H1 (cell line): ENCODE measurements at regions of chr3 and their contacts with region 1.

Region 1: DNA sequence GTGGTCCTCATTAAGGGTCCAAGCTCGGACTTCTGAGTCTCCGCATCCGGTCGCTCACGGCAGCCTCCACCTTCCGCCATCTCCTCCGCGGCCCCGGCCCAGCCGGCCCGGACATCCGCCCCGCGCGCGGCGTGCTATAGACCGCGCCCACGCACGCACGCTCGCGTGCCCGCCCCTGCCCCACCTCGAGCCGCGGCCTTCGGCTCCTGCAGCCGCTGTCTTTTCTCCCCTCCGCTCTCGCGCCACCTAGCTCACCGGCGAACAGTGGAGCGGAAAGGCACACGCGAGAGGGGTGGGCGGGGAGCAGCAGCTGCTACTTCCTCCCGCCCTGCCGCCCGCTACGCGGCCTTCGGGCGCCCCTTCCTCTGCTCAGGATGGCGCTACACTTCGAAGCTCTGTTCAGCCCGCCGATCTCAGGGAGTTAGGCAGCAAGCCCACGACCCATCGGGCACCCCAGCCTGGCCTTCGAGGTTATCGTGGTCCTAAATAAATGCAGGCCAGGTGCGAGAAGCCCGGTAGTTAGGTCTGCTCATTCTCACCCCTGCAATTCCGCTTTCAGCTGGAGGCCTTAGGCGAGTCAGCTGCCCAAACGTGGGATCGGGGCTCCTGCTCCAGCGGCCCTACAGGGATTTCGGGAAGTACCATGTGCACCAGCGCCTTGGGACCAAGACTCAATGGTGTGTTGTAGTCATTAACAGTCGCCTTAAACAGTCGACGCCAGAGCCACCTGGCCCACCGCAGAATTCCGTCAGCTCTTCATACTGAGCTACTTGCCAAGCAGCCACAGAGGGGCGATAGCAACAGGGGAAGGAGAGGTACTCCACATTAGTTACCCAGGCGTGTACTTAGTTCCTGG is at the start of gene USP4:
- DNase-seq: peak; percentile 43 to 81
- H3K4me3 ChIP-seq: peak within 1 kb of the TSS; percentile 59 to 75 (median 74)
- H3K27ac ChIP-seq: peak within 1 kb of the TSS; percentile 70; the same call in 1 of the 2 replicates
- H3K4me1 ChIP-seq: peaks cover 0 to 11% (median 5%) of the 10 kb centered on the region in 4 experiments; a peak in 4 of 7 replicates
- H3K27me3 ChIP-seq: no peaks in the 10 kb centered on the region; a peak in 1 of 7 replicates
- CTCF ChIP-seq: peak; percentile 42 to 71 (median 47)
- EP300 ChIP-seq: no peak
- POLR2A ChIP-seq: peak; percentile 39 to 44; a peak in 2 of 3 replicates
- RAD21 ChIP-seq: peak; percentile 53 to 63
- total RNA-seq, gene USP4: 27.8 and 28.3 TPM in 2 replicates

Region 2: DNA sequence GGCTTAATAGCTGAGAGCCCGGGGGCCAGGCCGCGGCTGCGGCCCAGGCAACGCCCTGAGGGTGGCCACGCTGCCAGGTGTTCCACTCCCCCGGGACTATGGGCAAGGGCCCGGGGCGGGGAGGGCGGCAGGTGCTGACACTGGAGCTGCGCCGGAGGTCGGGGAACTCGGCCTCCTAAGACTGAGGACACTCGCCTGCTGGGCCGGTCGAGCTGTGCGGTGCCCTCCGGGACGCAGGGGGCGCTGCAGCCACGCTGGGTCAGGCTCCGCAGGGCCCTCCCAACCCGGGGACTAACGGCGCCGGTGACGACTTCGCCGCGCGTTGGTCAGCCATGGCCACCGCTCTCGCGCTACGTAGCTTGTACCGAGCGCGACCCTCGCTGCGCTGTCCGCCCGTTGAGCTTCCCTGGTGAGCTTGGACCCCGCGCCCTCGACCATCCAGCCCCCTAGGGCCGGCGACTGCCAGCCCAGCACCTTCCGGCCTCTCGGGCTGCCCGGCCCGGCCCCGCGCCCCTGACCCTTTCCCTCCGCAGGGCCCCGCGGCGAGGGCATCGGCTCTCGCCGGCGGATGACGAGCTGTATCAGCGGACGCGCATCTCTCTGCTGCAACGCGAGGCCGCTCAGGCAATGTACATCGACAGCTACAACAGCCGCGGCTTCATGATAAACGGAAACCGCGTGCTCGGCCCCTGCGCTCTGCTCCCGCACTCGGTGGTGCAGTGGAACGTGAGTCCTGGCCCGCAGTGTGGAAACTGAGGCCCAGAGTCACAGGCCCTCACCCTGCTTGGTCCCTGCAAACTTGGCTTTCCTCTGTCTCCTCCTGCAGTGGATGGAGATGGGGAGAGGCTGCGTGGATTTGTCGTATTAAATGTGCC is 318.1 kb before region 1 on chr3 and contains the start of gene NDUFAF3:
- CTCF ChIA-PET with region 1: no interaction called
- POLR2A ChIA-PET with region 1: no interaction called
- DNase-seq: peak; percentile 82 to 98
- H3K4me3 ChIP-seq: peak within 1 kb of the TSS; percentile 84 to 97 (median 95)
- H3K27ac ChIP-seq: peak within 1 kb of the TSS; percentile 91
- H3K4me1 ChIP-seq: peaks cover 0 to 21% (median 13%) of the 10 kb centered on the region in 4 experiments; a peak in 6 of 7 replicates
- H3K27me3 ChIP-seq: no peaks in the 10 kb centered on the region; a peak in 1 of 7 replicates
- CTCF ChIP-seq: peak in 2 of 3 experiments; percentile 87 to 96; a peak in 3 of 4 replicates
- EP300 ChIP-seq: no peak; a peak in 1 of 3 replicates
- POLR2A ChIP-seq: peak in 1 of 2 experiments; percentile 88; a peak in 2 of 3 replicates
- RAD21 ChIP-seq: peak; percentile 25 to 41; a peak in 3 of 4 replicates
- total RNA-seq, gene NDUFAF3: 26.2 and 27.8 TPM in 2 replicates

Region 3: GRCh38 chr3:49255112-49255511 is 85.1 kb before region 1 on chr3:
- CTCF ChIA-PET with region 1: no interaction called
- POLR2A ChIA-PET with region 1: no interaction called
- DNase-seq: no peak
- H3K4me3 ChIP-seq: no peak overlapping the region
- H3K27ac ChIP-seq: no peak overlapping the region
- H3K4me1 ChIP-seq: no peaks in the 10 kb centered on the region
- H3K27me3 ChIP-seq: no peaks in the 10 kb centered on the region
- CTCF ChIP-seq: no peak
- EP300 ChIP-seq: no peak
- POLR2A ChIP-seq: no peak
- RAD21 ChIP-seq: no peak

Region 4: DNA sequence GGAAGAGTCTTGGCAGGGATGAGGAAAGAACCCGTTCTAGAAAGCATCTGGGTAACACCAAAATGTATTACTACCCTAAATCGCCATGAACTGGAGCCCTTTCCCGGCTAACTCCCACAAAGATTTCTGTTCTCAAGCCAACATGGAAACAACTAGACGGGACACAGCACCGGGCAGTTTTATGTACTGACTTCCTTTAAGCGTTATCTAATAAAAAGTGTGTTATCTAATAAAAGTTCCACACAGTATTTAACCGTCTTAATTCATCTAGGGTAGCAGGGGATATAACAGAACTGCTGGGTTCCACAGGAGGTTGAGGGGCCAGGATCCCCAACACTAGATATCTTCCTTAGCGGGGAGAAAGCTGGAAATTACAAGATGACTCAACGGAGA is 62.8 kb before region 1 on chr3:
- CTCF ChIA-PET with region 1: no interaction called
- POLR2A ChIA-PET with region 1: interaction called, 10 read pairs
- DNase-seq: no peak
- H3K4me3 ChIP-seq: peak overlapping the region; percentile 25 to 55 (median 36)
- H3K27ac ChIP-seq: no peak overlapping the region
- H3K4me1 ChIP-seq: peaks cover 0 to 4% (median 1%) of the 10 kb centered on the region in 4 experiments; a peak in 3 of 7 replicates
- H3K27me3 ChIP-seq: no peaks in the 10 kb centered on the region
- CTCF ChIP-seq: no peak
- EP300 ChIP-seq: no peak
- POLR2A ChIP-seq: no peak
- RAD21 ChIP-seq: no peak

Region 5: GRCh38 chr3:49302613-49303012 is 37.6 kb before region 1 on chr3:
- CTCF ChIA-PET with region 1: no interaction called
- POLR2A ChIA-PET with region 1: no interaction called
- DNase-seq: no peak
- H3K4me3 ChIP-seq: no peak overlapping the region
- H3K27ac ChIP-seq: no peak overlapping the region
- H3K4me1 ChIP-seq: no peaks in the 10 kb centered on the region
- H3K27me3 ChIP-seq: no peaks in the 10 kb centered on the region
- CTCF ChIP-seq: no peak
- EP300 ChIP-seq: no peak
- POLR2A ChIP-seq: no peak
- RAD21 ChIP-seq: no peak

Region 6: GRCh38 chr3:49351521-49352011 is 11.4 kb after region 1 on chr3:
- CTCF ChIA-PET with region 1: interaction called, 11 read pairs
- POLR2A ChIA-PET with region 1: interaction called, 15 read pairs
- DNase-seq: no peak
- H3K4me3 ChIP-seq: no peak overlapping the region
- H3K27ac ChIP-seq: no peak overlapping the region
- H3K4me1 ChIP-seq: no peaks in the 10 kb centered on the region; a peak in 1 of 7 replicates
- H3K27me3 ChIP-seq: no peaks in the 10 kb centered on the region
- CTCF ChIP-seq: no peak
- EP300 ChIP-seq: no peak
- POLR2A ChIP-seq: no peak
- RAD21 ChIP-seq: no peak

Region 7: DNA sequence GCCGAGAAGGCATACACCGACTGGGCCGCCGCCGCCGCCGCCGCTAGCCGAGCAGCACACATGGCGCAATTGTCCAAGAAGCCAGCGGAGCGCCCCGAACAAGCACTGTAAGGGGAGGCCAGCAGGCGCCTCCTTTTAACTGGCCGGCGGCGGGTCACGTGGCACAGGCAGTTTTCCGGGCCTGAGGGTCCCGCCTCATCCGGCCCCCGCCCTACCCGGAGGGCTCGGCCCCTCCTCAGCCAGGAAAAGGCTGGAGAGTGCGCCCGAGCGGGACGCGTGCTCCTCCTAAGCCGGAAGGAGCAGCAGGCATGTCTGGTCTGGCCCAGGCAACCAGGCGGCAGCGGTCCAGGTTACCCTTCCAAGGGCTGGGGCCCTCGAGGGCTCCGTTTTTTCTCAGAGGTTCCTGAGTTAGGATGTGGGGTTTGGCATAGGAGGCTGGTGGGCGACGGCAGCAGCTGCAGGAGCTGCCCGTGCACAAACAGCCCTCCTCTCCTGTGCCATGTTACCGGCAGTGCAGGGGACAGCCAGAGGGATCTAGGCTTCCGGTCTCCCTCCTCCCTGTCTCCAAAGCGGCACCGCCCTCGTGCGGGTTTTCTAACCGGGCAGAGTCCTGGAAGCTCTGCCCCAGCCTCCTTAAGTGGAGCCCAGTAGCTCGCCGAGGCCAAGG is 18.2 kb after region 1 on chr3 and contains the start of gene GPX1:
- CTCF ChIA-PET with region 1: interaction called, 11 read pairs
- POLR2A ChIA-PET with region 1: interaction called, 45 read pairs
- DNase-seq: peak; percentile 89 to 96
- H3K4me3 ChIP-seq: peak within 1 kb of the TSS; percentile 58 to 90 (median 86)
- H3K27ac ChIP-seq: peak within 1 kb of the TSS; percentile 92
- H3K4me1 ChIP-seq: peaks cover 1 to 3% (median 3%) of the 10 kb centered on the region in 4 experiments; a peak in 4 of 7 replicates
- H3K27me3 ChIP-seq: no peaks in the 10 kb centered on the region
- CTCF ChIP-seq: no peak
- EP300 ChIP-seq: no peak; a peak in 1 of 3 replicates
- POLR2A ChIP-seq: peak; percentile 70 to 75
- RAD21 ChIP-seq: peak in 1 of 2 experiments; percentile 8; a peak in 1 of 4 replicates
- total RNA-seq, gene GPX1: 250 and 252 TPM in 2 replicates

Region 8: GRCh38 chr3:49428697-49429100 is 88.5 kb after region 1 on chr3:
- CTCF ChIA-PET with region 1: interaction called, 3 read pairs
- POLR2A ChIA-PET with region 1: interaction called, 10 read pairs
- DNase-seq: no peak
- H3K4me3 ChIP-seq: peak overlapping the region; percentile 52 to 84 (median 77)
- H3K27ac ChIP-seq: no peak overlapping the region
- H3K4me1 ChIP-seq: no peaks in the 10 kb centered on the region; a peak in 1 of 7 replicates
- H3K27me3 ChIP-seq: no peaks in the 10 kb centered on the region
- CTCF ChIP-seq: no peak
- EP300 ChIP-seq: no peak
- POLR2A ChIP-seq: no peak
- RAD21 ChIP-seq: no peak; a peak in 1 of 4 replicates

Region 9: DNA sequence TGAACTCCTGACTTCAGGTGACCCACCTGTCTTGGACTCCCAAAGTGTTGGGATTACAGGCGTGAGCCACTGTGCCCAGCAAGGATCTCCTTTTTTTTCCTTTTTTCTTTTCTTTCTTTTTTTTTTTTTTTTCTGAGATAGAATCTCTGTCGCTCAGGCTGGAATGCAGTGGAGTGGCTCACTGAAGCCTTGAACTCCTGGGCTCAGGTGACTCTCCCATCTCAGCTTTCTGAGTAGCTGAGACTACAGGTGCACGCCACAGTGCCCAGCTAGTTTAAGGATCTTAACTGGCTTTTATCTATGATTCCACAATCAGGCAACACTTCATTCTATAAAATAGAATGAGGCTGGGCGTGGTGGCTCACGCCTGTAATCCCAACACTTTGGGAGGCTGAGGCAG is 105.2 kb after region 1 on chr3:
- CTCF ChIA-PET with region 1: interaction called, 18 read pairs
- POLR2A ChIA-PET with region 1: interaction called, 8 read pairs
- DNase-seq: no peak
- H3K4me3 ChIP-seq: no peak overlapping the region
- H3K27ac ChIP-seq: no peak overlapping the region
- H3K4me1 ChIP-seq: no peaks in the 10 kb centered on the region
- H3K27me3 ChIP-seq: no peaks in the 10 kb centered on the region
- CTCF ChIP-seq: no peak
- EP300 ChIP-seq: no peak
- POLR2A ChIP-seq: no peak
- RAD21 ChIP-seq: no peak